H1 (cell line): ENCODE measurements at regions of chr18 and their contacts with region 1.

Region 1: DNA sequence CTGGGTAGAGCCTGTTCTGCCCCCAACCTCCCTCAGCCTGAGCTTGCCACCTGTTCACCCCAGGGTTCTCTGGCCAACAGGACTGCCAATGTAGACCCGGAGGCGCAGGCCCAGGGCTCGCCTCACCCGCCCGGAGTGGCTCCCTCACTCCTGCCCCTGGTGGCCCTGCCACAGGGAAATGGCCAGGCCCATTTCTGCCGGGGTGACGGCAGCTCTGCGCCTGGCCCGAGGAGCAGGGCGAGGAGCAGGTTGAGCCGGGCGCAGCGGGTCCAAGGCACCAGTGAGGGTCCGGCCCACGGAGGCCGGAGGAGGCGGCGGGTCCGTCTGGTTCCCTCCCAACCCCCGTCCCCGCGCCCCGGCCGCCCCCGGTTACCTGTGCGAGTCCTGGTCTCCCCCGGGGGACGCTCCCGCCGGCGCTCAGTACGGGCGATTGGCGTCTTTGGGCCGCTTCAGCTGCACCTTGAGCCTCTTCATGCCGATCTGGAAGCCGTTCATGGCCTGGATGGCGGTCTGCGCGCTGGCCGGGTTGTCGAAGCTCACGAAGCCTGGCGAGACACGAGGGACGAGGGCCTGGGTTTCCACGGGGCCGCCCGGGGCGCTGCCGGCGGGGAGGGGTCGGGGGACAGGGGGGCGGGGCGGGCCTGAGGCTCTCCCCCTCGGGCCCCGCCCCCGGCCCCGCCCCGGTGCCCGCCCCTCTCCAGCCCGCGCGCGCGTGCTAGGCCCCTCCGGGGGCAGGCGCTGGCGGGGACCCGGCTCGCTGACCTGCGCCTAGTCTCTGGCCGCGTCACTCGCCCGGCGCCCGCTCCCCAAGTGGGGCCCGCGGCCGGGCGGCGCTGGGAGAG is 312.0 kb downstream of the CELF4 start:
- DNase-seq: peak in 1 of 2 experiments; percentile 78
- H3K4me3 ChIP-seq: peak overlapping the region; percentile 64 to 88 (median 66)
- H3K27ac ChIP-seq: no peak overlapping the region
- H3K4me1 ChIP-seq: peaks cover 0 to 15% (median 6%) of the 10 kb centered on the region in 4 experiments; a peak in 6 of 7 replicates
- H3K27me3 ChIP-seq: peaks cover 5 to 31% (median 22%) of the 10 kb centered on the region in 4 experiments
- CTCF ChIP-seq: peak; percentile 33 to 51 (median 42)
- EP300 ChIP-seq: no peak
- POLR2A ChIP-seq: 0 out of 3 replicates have a peak, but pooled peaks of 1 of the 2 experiments have one; percentile 37
- RAD21 ChIP-seq: peak in 1 of 2 experiments; percentile 38; a peak in 2 of 4 replicates

Region 2: GRCh38 chr18:37207343-37207742 is 46.3 kb before region 1 on chr18:
- CTCF ChIA-PET with region 1: interaction called, 16 read pairs
- POLR2A ChIA-PET with region 1: no interaction called
- DNase-seq: no peak
- H3K4me3 ChIP-seq: no peak overlapping the region
- H3K27ac ChIP-seq: no peak overlapping the region
- H3K4me1 ChIP-seq: no peaks in the 10 kb centered on the region
- H3K27me3 ChIP-seq: no peaks in the 10 kb centered on the region
- CTCF ChIP-seq: peak in 2 of 3 experiments; percentile 52 to 84; a peak in 3 of 4 replicates
- EP300 ChIP-seq: no peak
- POLR2A ChIP-seq: no peak
- RAD21 ChIP-seq: peak; percentile 72 to 78

Region 3: GRCh38 chr18:37270038-37270665 is 16.5 kb after region 1 on chr18:
- CTCF ChIA-PET with region 1: interaction called, 24 read pairs
- POLR2A ChIA-PET with region 1: interaction called, 3 read pairs
- DNase-seq: peak in 1 of 2 experiments; percentile 85
- H3K4me3 ChIP-seq: no peak overlapping the region
- H3K27ac ChIP-seq: no peak overlapping the region
- H3K4me1 ChIP-seq: no peaks in the 10 kb centered on the region
- H3K27me3 ChIP-seq: no peaks in the 10 kb centered on the region
- CTCF ChIP-seq: no peak
- EP300 ChIP-seq: no peak
- POLR2A ChIP-seq: no peak
- RAD21 ChIP-seq: no peak